ENCODE measurements at regions of chr15 and their contacts with region 1.

Region 1: DNA sequence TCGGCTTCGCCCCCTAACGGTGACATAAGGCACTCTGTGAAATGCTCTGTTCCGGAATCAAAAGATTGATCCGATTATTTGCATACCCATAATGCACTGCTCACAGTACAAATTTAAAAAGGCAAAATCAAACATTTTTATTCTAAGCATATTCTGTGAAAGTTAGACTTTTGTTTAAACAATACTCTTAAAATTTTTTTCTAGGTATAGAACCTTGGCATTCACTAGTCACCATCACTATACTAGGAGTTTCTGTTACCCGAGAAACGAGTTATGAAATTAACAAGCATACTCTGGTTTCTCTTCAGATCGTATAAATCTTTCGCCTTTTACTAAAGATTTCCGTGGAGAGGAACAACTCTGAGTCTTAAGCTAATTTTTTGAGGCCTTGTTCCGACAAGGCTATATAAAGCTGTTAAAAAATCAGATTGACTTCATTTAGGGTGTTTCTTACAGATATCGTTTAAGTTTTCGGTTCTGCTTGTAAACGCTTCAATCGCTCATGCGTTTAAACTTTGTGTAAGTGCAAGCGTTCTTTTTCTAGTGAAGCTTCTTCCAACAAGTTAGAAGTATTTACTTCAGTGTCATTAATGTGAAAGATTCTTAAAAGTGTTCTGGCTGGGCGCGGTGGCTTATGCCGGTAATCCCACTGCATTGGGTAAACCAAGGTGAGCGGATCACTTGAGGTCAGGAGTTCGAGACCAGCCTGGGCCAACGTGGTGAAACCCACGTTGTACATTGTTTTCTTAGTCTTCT is at the start of gene RNU5B-1:
- DNase-seq: peak; percentile 91 to 95 (median 93)
- H3K4me3 ChIP-seq: peak within 1 kb of the TSS in 6 of 7 experiments; percentile 65 to 84 (median 78)
- H3K27ac ChIP-seq: peak within 1 kb of the TSS; percentile 99 to 100
- H3K4me1 ChIP-seq: peaks cover 2 to 28% (median 16%) of the 10 kb centered on the region in 4 experiments
- H3K27me3 ChIP-seq: no peaks in the 10 kb centered on the region

Region 2: DNA sequence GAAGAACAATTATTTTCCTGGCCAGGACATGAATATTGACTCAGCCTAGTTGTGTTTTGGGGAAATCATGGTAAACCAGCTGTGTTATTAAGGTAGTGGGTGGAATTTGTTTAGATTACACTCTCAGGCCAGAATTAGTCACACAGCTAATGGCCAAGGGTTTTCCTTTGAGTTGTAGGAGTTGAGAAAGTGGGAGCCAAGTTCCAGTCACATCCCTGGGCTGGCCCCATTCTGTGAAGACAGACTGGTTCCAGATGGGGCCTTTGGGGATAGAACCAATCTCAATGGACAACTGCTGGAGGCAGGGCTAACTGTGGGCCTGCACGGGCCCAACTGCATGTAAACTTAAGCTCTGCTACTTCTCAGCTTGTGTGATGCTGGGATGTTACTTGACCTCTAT is 235.4 kb before region 1 on chr15:
- CTCF ChIA-PET with region 1: no interaction called
- POLR2A ChIA-PET with region 1: no interaction called
- DNase-seq: no peak
- H3K4me3 ChIP-seq: no peak overlapping the region
- H3K27ac ChIP-seq: no peak overlapping the region
- H3K4me1 ChIP-seq: peaks cover 0 to 21% (median 11%) of the 10 kb centered on the region in 4 experiments
- H3K27me3 ChIP-seq: peaks cover 7 to 41% (median 16%) of the 10 kb centered on the region in 5 experiments

Region 3: GRCh38 chr15:65184868-65185738 is 119.5 kb before region 1 on chr15 and contains the start of gene CLPX:
- CTCF ChIA-PET with region 1: interaction called, 10 read pairs
- POLR2A ChIA-PET with region 1: interaction called, 15 read pairs
- DNase-seq: peak; percentile 95 to 98 (median 97)
- H3K4me3 ChIP-seq: peak within 1 kb of the TSS; percentile 83 to 96 (median 91)
- H3K27ac ChIP-seq: peak within 1 kb of the TSS; percentile 86 to 94
- H3K4me1 ChIP-seq: peaks cover 9 to 24% (median 19%) of the 10 kb centered on the region in 4 experiments
- H3K27me3 ChIP-seq: no peaks in the 10 kb centered on the region

Region 4: GRCh38 chr15:65286704-65287519 is 17.7 kb before region 1 on chr15 and contains the start of gene PARP16:
- CTCF ChIA-PET with region 1: interaction called, 6 read pairs
- POLR2A ChIA-PET with region 1: interaction called, 15 read pairs
- DNase-seq: peak; percentile 92 to 97 (median 95)
- H3K4me3 ChIP-seq: peak within 1 kb of the TSS; percentile 35 to 87 (median 69)
- H3K27ac ChIP-seq: peak within 1 kb of the TSS; percentile 25 to 81
- H3K4me1 ChIP-seq: peaks cover 4 to 24% (median 18%) of the 10 kb centered on the region in 4 experiments
- H3K27me3 ChIP-seq: no peaks in the 10 kb centered on the region

Region 5: GRCh38 chr15:65292938-65293518 is 11.5 kb before region 1 on chr15:
- CTCF ChIA-PET with region 1: no interaction called
- POLR2A ChIA-PET with region 1: interaction called, 42 read pairs
- DNase-seq: no peak
- H3K4me3 ChIP-seq: no peak overlapping the region
- H3K27ac ChIP-seq: no peak overlapping the region
- H3K4me1 ChIP-seq: peaks cover 2 to 21% (median 15%) of the 10 kb centered on the region in 4 experiments
- H3K27me3 ChIP-seq: no peaks in the 10 kb centered on the region

Region 6: DNA sequence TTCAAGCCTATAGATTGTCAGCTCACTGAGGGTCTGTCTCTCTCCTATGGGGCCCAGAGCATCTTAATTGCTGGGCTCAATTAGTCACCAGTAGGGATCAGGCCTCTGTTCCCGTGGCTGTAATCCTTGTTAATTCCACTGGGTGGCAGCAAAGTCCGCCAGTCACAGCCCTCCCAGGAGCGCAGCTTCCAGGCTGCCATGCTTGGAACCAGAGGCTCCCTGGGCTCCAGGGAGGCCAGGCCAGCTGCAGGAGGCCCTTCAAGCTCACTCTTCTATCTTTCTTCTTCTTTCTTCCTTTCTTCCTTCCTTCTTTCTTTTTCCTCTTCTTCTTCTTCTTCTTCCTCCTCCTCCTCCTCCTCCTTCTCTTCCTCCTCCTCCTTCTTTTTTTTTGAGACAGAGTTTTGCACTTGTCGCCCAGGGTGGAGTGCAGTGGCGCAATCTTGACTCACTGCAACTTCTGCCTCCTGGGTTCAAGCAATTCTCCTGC is 14.3 kb after region 1 on chr15:
- CTCF ChIA-PET with region 1: interaction called, 7 read pairs
- POLR2A ChIA-PET with region 1: interaction called, 15 read pairs
- DNase-seq: peak; percentile 74 to 91 (median 86)
- H3K4me3 ChIP-seq: no peak overlapping the region
- H3K27ac ChIP-seq: no peak overlapping the region
- H3K4me1 ChIP-seq: peaks cover 0 to 10% (median 3%) of the 10 kb centered on the region in 4 experiments
- H3K27me3 ChIP-seq: peaks cover 0 to 5% (median 0%) of the 10 kb centered on the region in 5 experiments

Region 7: DNA sequence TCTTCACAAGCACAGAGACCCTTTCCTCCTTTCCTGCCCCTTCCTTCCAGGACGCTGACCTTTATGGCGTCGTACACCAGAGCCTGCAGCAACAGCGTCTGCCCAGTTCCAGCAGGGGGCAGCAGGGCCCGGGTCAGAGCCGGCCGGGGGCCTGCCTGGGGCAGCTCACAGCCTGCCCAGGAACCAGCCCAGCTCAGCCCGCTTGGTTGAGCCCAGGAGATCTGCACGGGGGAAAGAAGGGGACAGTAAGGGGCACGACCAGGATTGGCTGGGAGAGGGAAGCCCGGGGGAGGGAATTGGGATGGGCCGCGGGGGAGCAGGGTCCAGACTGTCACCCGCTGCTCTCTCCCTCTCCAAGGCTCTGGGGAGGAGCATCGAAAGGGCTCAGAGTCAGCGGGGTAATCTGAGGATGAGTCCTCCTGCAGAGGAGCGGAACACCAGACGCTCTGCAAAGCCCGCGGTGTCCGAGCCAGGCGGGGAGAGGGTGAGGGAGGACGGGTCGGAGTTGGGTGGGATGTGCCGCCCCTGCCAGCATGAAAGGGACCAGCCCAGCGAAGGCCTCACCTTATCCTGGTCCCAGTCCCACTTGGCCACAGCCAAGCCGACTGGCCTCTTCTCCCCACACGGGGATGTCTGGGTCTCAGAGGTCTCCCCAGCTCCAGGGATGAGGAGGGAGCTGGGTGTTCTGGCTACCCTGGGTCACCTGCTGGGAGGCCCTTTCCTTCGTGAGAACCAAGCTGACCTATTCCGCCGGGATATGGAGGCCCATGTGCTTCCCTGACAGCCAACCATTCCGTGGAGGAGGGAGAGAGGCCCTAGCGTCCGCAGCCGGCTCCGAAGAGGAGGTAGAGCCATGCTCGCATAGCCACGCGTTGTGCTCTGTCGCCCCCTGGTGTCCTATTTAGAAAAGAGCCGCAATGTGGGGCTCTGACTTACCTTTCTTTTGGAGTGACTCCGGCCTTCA is 80.6 kb after region 1 on chr15:
- CTCF ChIA-PET with region 1: interaction called, 12 read pairs
- POLR2A ChIA-PET with region 1: interaction called, 7 read pairs
- DNase-seq: peak; percentile 75 to 87 (median 81)
- H3K4me3 ChIP-seq: peak overlapping the region; percentile 10 to 74 (median 44)
- H3K27ac ChIP-seq: no peak overlapping the region
- H3K4me1 ChIP-seq: peaks cover 0 to 12% (median 11%) of the 10 kb centered on the region in 4 experiments
- H3K27me3 ChIP-seq: peaks cover 0 to 37% (median 24%) of the 10 kb centered on the region in 5 experiments